ENCODE measurements at regions of chr9 and their contacts with region 1.

Region 1: DNA sequence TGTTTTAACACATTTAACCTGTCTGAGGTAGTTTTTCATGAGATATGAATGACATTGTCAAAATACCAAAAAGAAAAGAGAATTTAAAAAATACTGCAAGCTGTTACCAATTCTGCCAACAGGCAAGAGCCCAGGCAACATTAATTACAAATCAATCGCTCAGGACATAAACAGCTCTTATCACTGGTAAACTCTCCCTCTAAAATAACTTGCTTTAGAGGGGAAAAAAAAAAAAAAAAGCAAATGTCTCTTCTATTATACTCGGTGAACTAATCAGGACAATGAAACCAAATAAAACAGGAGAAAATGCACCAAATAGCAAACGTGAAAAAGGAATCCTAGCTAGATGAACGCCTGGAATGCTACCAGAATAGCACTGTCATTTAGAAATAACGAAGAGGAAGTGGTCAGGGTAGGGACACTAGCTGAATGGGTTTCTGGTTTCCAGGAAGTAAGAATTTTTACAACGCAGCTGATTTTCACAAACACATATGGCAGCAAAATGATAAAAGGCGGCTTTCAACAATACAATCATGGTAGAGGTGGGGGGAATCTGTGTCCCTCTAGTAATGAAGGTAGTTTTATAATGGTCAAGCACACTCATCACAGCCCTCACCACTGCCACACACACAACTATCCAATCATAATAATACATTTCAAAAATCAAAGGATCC is 94.9 kb downstream of the DENND1A start:
- DNase-seq: peak; percentile 49
- ATAC-seq: peak; percentile 62
- H3K4me3 ChIP-seq: peak overlapping the region in 4 of 5 experiments; percentile 18 to 63 (median 36)
- H3K4me3 Mint-ChIP-seq: peak overlapping the region; percentile 75
- H3K27ac ChIP-seq: peak overlapping the region in 1 of 2 donors; percentile 40
- H3K27ac Mint-ChIP-seq: peak overlapping the region; percentile 17
- H3K4me1 ChIP-seq: peaks cover 14 to 17% of the 10 kb centered on the region in 2 donors
- H3K4me1 Mint-ChIP-seq: peaks cover 27% of the 10 kb centered on the region
- H3K27me3 ChIP-seq: no peaks in the 10 kb centered on the region
- H3K27me3 Mint-ChIP-seq: no peaks in the 10 kb centered on the region
- CTCF ChIP-seq: no peak

Region 2: DNA sequence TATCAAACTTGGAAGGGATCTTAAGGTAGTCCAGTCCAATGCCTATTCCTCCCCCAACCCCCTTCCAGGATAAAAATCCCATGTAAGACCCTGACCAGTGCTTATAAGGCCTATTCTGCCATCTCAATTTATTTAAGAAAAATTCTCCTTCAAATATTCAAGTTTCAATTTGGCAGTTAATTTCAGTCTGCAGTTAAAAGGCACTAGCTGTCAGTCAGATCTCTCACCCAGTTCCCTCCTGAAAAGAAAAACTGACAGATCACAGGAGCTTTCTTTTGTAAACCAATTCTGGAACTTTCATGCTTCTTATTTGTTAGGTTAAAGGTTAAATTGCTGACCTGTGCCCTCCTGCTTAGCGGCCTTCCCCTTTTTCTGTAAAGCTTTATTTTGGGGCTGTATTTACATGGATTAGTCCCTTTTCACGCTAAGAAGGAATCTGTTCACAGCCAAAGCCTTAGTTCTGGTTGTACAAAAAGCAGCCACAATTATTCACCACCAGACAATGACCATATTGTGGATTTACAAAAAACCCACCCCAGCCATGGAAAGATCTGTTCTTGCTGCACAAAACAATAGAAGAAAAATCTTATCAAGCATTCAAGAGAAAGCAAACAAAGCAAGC is 26.2 kb after region 1 on chr9:
- CTCF ChIA-PET with region 1: no interaction called
- POLR2A ChIA-PET with region 1: no interaction called
- intact Hi-C with region 1: loop called (anchors 1 kb)
- DNase-seq: no peak
- ATAC-seq: no peak
- H3K4me3 ChIP-seq: no peak overlapping the region
- H3K4me3 Mint-ChIP-seq: no peak overlapping the region
- H3K27ac ChIP-seq: no peak overlapping the region
- H3K27ac Mint-ChIP-seq: no peak overlapping the region
- H3K4me1 ChIP-seq: peaks cover 7 to 11% of the 10 kb centered on the region in 2 donors
- H3K4me1 Mint-ChIP-seq: peaks cover 9% of the 10 kb centered on the region
- H3K27me3 ChIP-seq: no peaks in the 10 kb centered on the region
- H3K27me3 Mint-ChIP-seq: no peaks in the 10 kb centered on the region
- CTCF ChIP-seq: no peak